ENCODE measurements at regions of chr20 and their contacts with region 1.

Region 1: GRCh38 chr20:46174469-46175128 is 56.5 kb downstream of the CD40 start:
- DNase-seq: peak; percentile 70 to 92
- H3K4me3 ChIP-seq: peak overlapping the region; percentile 9 to 50 (median 20); a peak in 5 of 8 replicates
- H3K27ac ChIP-seq: no peak overlapping the region
- H3K4me1 ChIP-seq: no peaks in the 10 kb centered on the region; a peak in 1 of 7 replicates
- H3K27me3 ChIP-seq: peaks cover 8 to 33% (median 32%) of the 10 kb centered on the region in 4 experiments
- CTCF ChIP-seq: peak; percentile 82 to 88 (median 85)
- EP300 ChIP-seq: no peak; a peak in 1 of 3 replicates
- POLR2A ChIP-seq: no peak
- RAD21 ChIP-seq: peak; percentile 65 to 82

Region 2: DNA sequence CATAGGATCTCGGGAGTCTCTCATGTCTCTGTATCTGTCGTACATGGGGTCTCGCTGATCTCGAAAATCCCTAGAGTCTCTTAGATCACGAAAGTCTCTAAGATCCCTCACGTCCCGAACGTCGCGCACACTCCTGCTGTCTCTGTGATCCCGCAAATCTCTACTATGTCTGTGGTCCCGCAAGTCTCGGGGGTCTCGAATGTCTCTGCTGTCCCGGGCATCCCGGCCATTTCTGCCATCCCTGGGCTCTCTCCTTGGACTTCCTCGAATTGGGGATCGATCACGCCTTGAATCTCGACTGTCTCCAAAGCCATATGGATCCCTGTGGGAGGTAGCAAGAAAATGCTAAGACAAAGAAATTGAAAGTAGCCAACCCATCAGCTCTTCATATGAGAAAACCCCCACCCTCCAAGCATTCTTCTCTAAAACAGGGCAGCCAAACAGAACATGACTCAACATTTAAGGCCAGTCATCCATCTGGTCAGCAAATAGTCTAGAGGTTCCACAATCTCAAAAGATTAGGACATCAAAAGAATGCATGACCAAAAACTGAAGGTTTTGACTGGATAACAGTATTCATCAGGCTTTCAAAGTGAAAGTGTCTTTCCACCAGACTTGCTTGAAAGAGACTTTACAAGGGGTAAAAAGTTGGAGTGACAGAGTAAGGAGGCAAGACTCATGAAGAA is 104.2 kb before region 1 on chr20:
- CTCF ChIA-PET with region 1: no interaction called
- POLR2A ChIA-PET with region 1: no interaction called
- DNase-seq: peak in 1 of 2 experiments; percentile 28
- H3K4me3 ChIP-seq: no peak overlapping the region
- H3K27ac ChIP-seq: no peak overlapping the region
- H3K4me1 ChIP-seq: peaks cover 4 to 14% (median 7%) of the 10 kb centered on the region in 4 experiments; a peak in 5 of 7 replicates
- H3K27me3 ChIP-seq: no peaks in the 10 kb centered on the region
- CTCF ChIP-seq: no peak
- EP300 ChIP-seq: no peak
- POLR2A ChIP-seq: no peak
- RAD21 ChIP-seq: no peak

Region 3: DNA sequence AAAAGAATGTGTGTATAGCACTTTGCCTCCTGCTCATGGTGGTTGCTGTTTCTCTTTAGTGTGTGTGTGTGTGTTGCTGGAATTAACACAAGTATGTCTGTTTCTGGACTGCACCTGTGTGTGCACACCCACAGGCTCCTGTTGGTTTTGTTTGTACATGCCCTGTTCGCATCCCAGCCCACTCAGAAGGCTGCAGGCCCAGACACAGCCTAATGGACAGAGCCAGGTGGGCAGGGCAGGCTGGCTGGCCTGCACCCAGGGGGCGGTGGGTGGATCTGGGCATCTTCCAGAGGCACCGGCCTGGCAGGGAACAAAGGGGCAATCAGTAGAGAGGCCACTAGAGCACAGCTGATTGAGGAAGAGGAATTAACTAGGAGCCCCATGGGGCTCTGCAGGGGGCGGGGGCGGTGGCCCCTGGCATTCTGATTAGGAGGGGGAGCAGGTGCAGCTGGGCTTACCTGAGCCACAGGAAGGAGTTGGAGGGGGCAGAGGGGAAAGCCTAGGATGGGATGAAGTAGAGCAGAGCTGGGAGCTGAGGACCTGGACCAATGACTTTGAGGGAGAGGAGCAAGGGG is 34.6 kb before region 1 on chr20:
- CTCF ChIA-PET with region 1: interaction called, 233 read pairs
- POLR2A ChIA-PET with region 1: no interaction called
- DNase-seq: no peak
- H3K4me3 ChIP-seq: no peak overlapping the region
- H3K27ac ChIP-seq: no peak overlapping the region
- H3K4me1 ChIP-seq: peaks cover 3 to 18% (median 11%) of the 10 kb centered on the region in 4 experiments
- H3K27me3 ChIP-seq: no peaks in the 10 kb centered on the region
- CTCF ChIP-seq: no peak
- EP300 ChIP-seq: no peak
- POLR2A ChIP-seq: no peak
- RAD21 ChIP-seq: no peak

Region 4: GRCh38 chr20:46186210-46186609 is 11.6 kb after region 1 on chr20:
- CTCF ChIA-PET with region 1: interaction called, 12 read pairs
- POLR2A ChIA-PET with region 1: no interaction called
- DNase-seq: no peak
- H3K4me3 ChIP-seq: no peak overlapping the region
- H3K27ac ChIP-seq: no peak overlapping the region
- H3K4me1 ChIP-seq: no peaks in the 10 kb centered on the region
- H3K27me3 ChIP-seq: no peaks in the 10 kb centered on the region; a peak in 1 of 7 replicates
- CTCF ChIP-seq: no peak
- EP300 ChIP-seq: no peak
- POLR2A ChIP-seq: no peak
- RAD21 ChIP-seq: no peak

Region 5: DNA sequence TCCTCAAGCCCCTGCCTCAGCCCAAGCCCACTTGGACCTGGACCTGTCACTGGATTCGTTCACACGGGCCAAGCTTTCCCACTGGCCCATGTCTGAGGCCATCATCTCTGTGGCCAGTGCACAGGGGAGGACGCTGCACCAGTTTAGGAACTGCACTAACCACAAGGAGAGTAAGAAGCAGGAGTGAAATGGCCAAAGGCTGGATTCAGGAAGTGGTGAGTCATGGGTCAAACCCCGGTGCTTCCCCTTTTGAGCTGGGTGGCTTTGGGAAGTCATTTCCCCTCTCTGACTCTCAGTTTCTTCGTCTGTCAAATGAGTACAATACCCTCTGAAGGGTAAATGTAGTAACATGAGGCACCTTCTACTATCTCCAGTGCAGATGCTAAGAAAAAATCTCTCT is 31.4 kb after region 1 on chr20:
- CTCF ChIA-PET with region 1: interaction called, 11 read pairs
- POLR2A ChIA-PET with region 1: no interaction called
- DNase-seq: no peak
- H3K4me3 ChIP-seq: no peak overlapping the region
- H3K27ac ChIP-seq: no peak overlapping the region
- H3K4me1 ChIP-seq: peaks cover 0 to 11% (median 5%) of the 10 kb centered on the region in 4 experiments; a peak in 5 of 7 replicates
- H3K27me3 ChIP-seq: peaks cover 0 to 2% (median 0%) of the 10 kb centered on the region in 4 experiments; a peak in 2 of 7 replicates
- CTCF ChIP-seq: no peak
- EP300 ChIP-seq: no peak
- POLR2A ChIP-seq: no peak
- RAD21 ChIP-seq: no peak

Region 6: GRCh38 chr20:46307139-46307998 is 132.8 kb after region 1 on chr20:
- CTCF ChIA-PET with region 1: interaction called, 12 read pairs
- POLR2A ChIA-PET with region 1: no interaction called
- DNase-seq: peak; percentile 49 to 89
- H3K4me3 ChIP-seq: peak overlapping the region; percentile 48 to 75 (median 55)
- H3K27ac ChIP-seq: no peak overlapping the region
- H3K4me1 ChIP-seq: peaks cover 0 to 7% (median 5%) of the 10 kb centered on the region in 4 experiments; a peak in 5 of 7 replicates
- H3K27me3 ChIP-seq: peaks cover 44 to 73% (median 67%) of the 10 kb centered on the region in 4 experiments
- CTCF ChIP-seq: peak; percentile 92 to 97 (median 96)
- EP300 ChIP-seq: 0 out of 3 replicates have a peak, but pooled peaks of 1 of the 2 experiments have one; percentile 22
- POLR2A ChIP-seq: no peak
- RAD21 ChIP-seq: peak; percentile 81 to 90

Measured in H1 (cell line).